ENCODE measurements at regions of chr2 and their contacts with region 1.

Region 1: DNA sequence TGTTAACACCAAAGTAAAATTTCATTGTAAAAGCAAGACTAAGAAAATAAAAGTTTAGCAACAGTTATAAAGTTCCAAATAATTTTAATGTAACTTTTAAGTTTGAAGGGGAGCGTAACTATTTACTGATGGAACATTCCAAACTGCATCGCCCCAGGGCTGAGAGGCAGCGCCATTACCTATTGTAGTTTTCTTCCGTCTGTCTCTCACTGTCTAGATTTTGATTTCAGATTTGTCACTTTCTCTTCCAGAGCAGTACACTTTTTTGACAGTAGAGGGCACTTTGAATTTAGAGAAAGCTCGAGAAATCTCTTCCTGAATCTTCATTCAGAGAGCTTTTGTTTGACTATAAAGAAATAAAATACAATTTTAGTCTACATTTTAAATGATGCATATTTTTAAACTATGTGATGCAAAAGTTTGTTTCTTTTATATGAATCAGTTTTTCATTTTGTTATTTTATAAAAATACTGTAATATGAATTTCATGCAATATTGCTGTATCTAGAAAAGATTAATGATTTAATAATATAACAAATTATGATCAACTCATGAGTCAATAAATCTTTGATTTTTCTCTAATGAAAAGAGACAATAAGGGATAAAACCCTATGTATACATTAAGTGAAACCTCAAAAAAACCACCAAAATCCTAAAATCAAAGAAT is 389.8 kb downstream of the FIGN start:
- DNase-seq: peak in 18 of 42 donors; percentile 11 to 73 (median 22)

Region 2: GRCh38 chr2:163580769-163581168 is 234.7 kb after region 1 on chr2:
- intact Hi-C with region 1: no loop called
- DNase-seq: no peak

Region 3: DNA sequence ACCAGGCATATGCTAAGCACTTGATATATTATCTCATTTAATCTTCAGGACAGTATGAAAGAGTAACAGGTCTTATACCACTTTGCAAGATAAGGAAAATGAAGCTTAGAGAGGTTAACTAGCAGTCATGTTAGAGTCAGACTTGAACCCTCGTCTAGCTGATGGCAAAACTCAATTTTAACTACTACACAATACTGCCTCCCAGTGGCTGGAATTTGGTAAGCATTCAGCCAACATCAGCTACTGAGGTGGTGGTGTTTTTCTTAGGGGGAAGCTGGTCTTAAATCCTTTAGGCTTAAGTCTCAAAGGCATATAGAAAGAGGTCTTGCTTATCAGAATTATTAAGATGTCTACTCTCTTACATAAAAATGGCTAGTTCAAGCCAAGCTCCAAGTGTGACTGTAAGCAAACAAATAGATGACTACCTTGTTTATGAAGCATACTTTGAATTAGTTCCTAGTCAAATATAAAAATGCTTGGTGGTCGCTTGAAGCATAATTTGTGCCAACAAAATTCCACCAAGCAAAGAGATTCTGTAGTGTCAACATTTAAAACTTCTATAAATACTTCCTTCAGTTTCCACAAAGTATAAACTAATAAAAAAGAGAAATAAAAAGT is 715.2 kb after region 1 on chr2:
- intact Hi-C with region 1: loop called (anchors 5 kb)
- DNase-seq: peak in 35 of 42 donors; percentile 15 to 86 (median 56)

Region 4: DNA sequence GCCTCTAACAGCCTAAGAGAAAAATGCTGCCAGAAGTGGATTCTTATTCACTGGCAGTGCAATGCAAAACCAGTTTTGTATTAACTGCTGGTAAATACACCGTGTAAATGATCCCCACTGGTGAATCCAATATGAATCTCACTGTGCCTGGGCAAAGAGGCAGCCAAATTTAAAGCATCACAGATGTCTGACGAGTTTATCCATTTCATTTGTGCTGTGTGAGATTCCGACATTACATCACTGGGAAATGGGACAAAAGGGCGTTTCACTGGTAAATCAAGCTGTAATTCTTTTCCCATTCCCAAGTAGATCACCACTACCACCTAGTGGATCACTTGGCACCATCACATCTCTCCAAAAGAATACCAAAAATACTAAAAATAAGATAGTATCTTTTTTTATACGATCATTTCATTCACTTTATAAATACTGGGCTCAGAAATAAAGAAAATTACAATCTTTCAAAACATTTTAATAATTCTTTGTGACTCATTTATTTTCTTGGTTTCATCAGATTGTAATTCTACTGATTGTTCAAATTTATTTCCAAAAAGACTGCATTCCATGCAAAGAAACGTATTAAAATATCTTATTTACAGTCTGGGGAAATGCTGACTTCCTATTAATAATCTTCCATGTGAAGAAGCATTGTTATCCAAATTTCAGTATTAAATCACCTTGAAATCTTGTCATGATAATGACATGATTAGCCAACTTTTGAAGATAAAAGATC is 1149.6 kb after region 1 on chr2:
- intact Hi-C with region 1: loop called (anchors 10 kb)
- DNase-seq: peak in 30 of 42 donors; percentile 5 to 85 (median 46)